ENCODE measurements at regions of chr7 and their contacts with region 1.

Region 1: DNA sequence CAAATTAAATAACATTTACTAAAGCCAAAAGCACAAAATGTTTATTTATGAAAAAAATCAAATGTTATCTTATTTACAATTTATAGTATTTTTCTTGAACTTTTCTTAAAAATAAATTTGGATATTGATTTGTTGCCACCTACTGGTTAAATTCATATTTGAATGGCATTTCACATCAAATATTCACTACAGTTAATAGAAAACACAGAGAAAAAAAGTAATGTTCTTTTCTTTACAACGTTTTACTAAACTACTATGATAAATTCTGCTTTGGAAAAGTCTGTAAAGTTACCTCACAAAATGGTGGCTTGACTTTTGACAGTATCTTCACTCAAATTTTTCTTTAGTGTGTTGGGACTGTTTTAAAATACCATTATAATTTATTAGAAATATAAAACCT is 52.7 kb downstream of the SRPK2 start:
- DNase-seq: peak; percentile 35
- H3K4me3 ChIP-seq: no peak overlapping the region
- H3K27ac ChIP-seq: no peak overlapping the region
- H3K4me1 ChIP-seq: peaks cover 3% of the 10 kb centered on the region
- H3K27me3 ChIP-seq: no peaks in the 10 kb centered on the region
- CTCF ChIP-seq: peak in 1 of 2 donors; percentile 15
- POLR2A ChIP-seq: no peak

Region 2: GRCh38 chr7:105118612-105119600 is 217.1 kb before region 1 on chr7:
- CTCF ChIA-PET with region 1: interaction called, 3 read pairs
- POLR2A ChIA-PET with region 1: no interaction called
- dilution Hi-C with region 1: no loop called
- intact Hi-C with region 1: loop called (anchors 10 kb)
- DNase-seq: no peak
- H3K4me3 ChIP-seq: no peak overlapping the region
- H3K27ac ChIP-seq: no peak overlapping the region
- H3K4me1 ChIP-seq: no peaks in the 10 kb centered on the region
- H3K27me3 ChIP-seq: no peaks in the 10 kb centered on the region
- CTCF ChIP-seq: no peak
- POLR2A ChIP-seq: no peak

Region 3: GRCh38 chr7:105161366-105161765 is 174.6 kb before region 1 on chr7:
- CTCF ChIA-PET with region 1: no interaction called
- POLR2A ChIA-PET with region 1: no interaction called
- dilution Hi-C with region 1: no loop called
- intact Hi-C with region 1: no loop called
- DNase-seq: no peak
- H3K4me3 ChIP-seq: no peak overlapping the region
- H3K27ac ChIP-seq: no peak overlapping the region
- H3K4me1 ChIP-seq: no peaks in the 10 kb centered on the region
- H3K27me3 ChIP-seq: no peaks in the 10 kb centered on the region
- CTCF ChIP-seq: no peak
- POLR2A ChIP-seq: no peak

Region 4: DNA sequence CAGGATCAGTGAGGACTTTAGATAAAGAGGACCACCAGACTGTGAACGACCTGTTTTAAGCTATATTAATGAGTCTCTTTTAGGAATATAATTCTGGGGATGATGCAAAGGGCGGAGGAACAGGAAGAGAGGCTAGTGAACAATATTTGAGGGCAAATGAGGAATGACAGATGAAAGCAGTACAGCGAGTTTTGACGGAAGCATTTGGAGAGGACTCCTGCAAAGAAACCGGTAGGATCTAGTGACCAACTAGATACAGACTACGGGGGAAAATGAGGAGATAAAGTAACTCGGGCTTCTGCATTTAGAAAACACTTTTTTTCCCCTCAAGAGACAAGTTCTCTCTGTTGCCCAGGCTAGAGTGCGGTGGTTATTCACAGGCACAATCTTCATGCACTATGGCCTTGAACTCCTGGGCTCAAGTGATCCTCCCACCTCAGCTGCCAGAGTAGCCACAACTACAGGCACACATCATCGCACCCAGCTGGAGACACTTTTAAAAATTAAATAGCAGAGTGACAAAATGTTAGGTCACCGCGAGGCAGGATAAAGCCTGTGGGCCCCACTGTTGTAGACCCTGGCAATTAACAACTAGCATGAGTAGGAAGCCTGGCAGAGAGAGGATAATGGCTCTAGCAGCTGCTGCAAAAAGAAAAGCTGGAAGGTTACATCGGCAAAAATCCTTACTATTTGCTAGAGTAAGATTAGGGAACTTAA is 90.5 kb before region 1 on chr7:
- CTCF ChIA-PET with region 1: no interaction called
- POLR2A ChIA-PET with region 1: no interaction called
- dilution Hi-C with region 1: no loop called
- intact Hi-C with region 1: no loop called
- DNase-seq: no peak
- H3K4me3 ChIP-seq: no peak overlapping the region
- H3K27ac ChIP-seq: no peak overlapping the region
- H3K4me1 ChIP-seq: peaks cover 4% of the 10 kb centered on the region
- H3K27me3 ChIP-seq: no peaks in the 10 kb centered on the region
- CTCF ChIP-seq: no peak
- POLR2A ChIP-seq: no peak